ENCODE measurements at regions of chr7 and their contacts with region 1.

Region 1: DNA sequence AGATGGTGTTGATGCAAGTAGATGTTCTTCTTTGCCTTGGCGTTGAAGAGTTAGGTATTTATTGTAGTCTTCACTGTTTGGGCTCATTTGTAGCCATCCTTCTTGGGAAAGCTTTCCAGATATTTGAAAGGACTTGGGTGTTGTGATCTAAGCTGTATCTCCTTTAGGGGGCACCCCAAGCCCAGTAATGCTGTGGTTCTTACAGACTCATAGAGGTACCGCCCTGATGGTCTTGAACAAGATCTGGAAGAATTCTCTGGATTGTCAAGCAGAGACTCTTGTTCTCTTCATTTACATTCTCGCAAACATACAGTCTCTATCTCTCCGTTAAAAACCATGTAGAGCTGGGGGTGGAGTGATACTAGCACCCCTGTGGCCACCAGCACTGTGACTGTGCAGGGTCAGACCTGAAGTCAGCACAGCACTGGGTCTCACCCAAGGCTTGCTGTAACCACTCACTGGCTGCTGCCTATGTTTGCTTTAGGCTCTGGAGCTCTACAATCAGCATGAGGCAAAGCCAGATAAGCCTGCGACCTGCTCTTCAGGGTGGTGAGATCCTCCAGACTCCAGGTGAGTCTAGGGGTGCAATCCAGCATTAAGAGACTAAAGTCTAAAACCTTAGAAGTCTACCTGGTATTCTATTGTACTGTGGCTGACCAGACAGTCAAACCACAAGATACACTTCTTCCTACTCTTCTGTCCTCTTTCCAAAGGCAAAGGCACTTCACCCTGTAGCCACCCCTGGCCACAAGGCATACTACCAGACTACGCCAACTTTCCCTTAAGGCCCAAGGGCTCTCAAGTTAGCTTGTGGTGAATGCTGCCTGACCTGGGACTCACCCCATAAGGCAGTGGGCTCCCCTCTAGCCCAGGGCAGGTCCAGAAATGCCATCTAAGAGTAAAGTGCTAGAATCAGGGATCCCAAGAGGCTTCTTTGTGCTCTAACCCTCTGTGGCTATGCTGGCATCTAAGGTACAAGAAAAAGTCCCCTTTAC is 209.7 kb upstream of the TMEM196 start:
- DNase-seq: no peak
- ATAC-seq: peak; percentile 50
- H3K4me3 Mint-ChIP-seq: no peak overlapping the region
- H3K27ac Mint-ChIP-seq: no peak overlapping the region
- H3K4me1 Mint-ChIP-seq: no peaks in the 10 kb centered on the region
- H3K27me3 Mint-ChIP-seq: no peaks in the 10 kb centered on the region
- CTCF ChIP-seq: no peak

Region 2: GRCh38 chr7:19713676-19714075 is 269.5 kb before region 1 on chr7:
- CTCF ChIA-PET with region 1: interaction called, 14 read pairs
- POLR2A ChIA-PET with region 1: no interaction called
- intact Hi-C with region 1: loop called (anchors 1 kb)
- DNase-seq: no peak
- ATAC-seq: no peak
- H3K4me3 Mint-ChIP-seq: no peak overlapping the region
- H3K27ac Mint-ChIP-seq: no peak overlapping the region
- H3K4me1 Mint-ChIP-seq: peaks cover 14% of the 10 kb centered on the region
- H3K27me3 Mint-ChIP-seq: peaks cover 9% of the 10 kb centered on the region
- CTCF ChIP-seq: no peak

Region 3: GRCh38 chr7:20114468-20114867 is 131.3 kb after region 1 on chr7:
- CTCF ChIA-PET with region 1: interaction called, 8 read pairs
- POLR2A ChIA-PET with region 1: no interaction called
- intact Hi-C with region 1: loop called (anchors 5 kb)
- DNase-seq: no peak
- ATAC-seq: peak; percentile 90
- H3K4me3 Mint-ChIP-seq: peak overlapping the region; percentile 39
- H3K27ac Mint-ChIP-seq: peak overlapping the region; percentile 54
- H3K4me1 Mint-ChIP-seq: peaks cover 25% of the 10 kb centered on the region
- H3K27me3 Mint-ChIP-seq: no peaks in the 10 kb centered on the region
- CTCF ChIP-seq: no peak

Region 4: GRCh38 chr7:20172736-20173334 is 189.7 kb after region 1 on chr7:
- CTCF ChIA-PET with region 1: interaction called, 47 read pairs
- POLR2A ChIA-PET with region 1: interaction called, 3 read pairs
- intact Hi-C with region 1: loop called (anchors 1 kb)
- DNase-seq: peak; percentile 27
- ATAC-seq: peak; percentile 61
- H3K4me3 Mint-ChIP-seq: no peak overlapping the region
- H3K27ac Mint-ChIP-seq: no peak overlapping the region
- H3K4me1 Mint-ChIP-seq: peaks cover 11% of the 10 kb centered on the region
- H3K27me3 Mint-ChIP-seq: no peaks in the 10 kb centered on the region
- CTCF ChIP-seq: no peak

Region 5: GRCh38 chr7:20402747-20403230 is 419.7 kb after region 1 on chr7:
- CTCF ChIA-PET with region 1: interaction called, 3 read pairs
- POLR2A ChIA-PET with region 1: no interaction called
- intact Hi-C with region 1: loop called (anchors 1 kb)
- DNase-seq: no peak
- ATAC-seq: no peak
- H3K4me3 Mint-ChIP-seq: no peak overlapping the region
- H3K27ac Mint-ChIP-seq: no peak overlapping the region
- H3K4me1 Mint-ChIP-seq: no peaks in the 10 kb centered on the region
- H3K27me3 Mint-ChIP-seq: no peaks in the 10 kb centered on the region
- CTCF ChIP-seq: no peak